ENCODE measurements at regions of chr20 and their contacts with region 1.

Region 1: GRCh38 chr20:2206957-2207769 is 88.6 kb upstream of the TGM3 start:
- DNase-seq: peak; percentile 85
- ATAC-seq: peak; percentile 77
- H3K4me3 Mint-ChIP-seq: peak overlapping the region; percentile 67
- H3K27ac Mint-ChIP-seq: peak overlapping the region; percentile 24
- H3K4me1 Mint-ChIP-seq: peaks cover 9% of the 10 kb centered on the region
- H3K27me3 Mint-ChIP-seq: no peaks in the 10 kb centered on the region

Region 2: GRCh38 chr20:1663917-1664316 is 543.2 kb before region 1 on chr20:
- CTCF ChIA-PET with region 1: no interaction called
- POLR2A ChIA-PET with region 1: no interaction called
- intact Hi-C with region 1: no loop called
- DNase-seq: peak; percentile 46
- ATAC-seq: peak; percentile 55
- H3K4me3 Mint-ChIP-seq: peak overlapping the region; percentile 47
- H3K27ac Mint-ChIP-seq: peak overlapping the region; percentile 98
- H3K4me1 Mint-ChIP-seq: peaks cover 96% of the 10 kb centered on the region
- H3K27me3 Mint-ChIP-seq: no peaks in the 10 kb centered on the region

Region 3: GRCh38 chr20:2114990-2115681 is 92.0 kb before region 1 on chr20:
- CTCF ChIA-PET with region 1: no interaction called
- POLR2A ChIA-PET with region 1: no interaction called
- intact Hi-C with region 1: loop called in 1 of 2 experiments (anchors 5 kb)
- DNase-seq: no peak
- ATAC-seq: no peak
- H3K4me3 Mint-ChIP-seq: no peak overlapping the region
- H3K27ac Mint-ChIP-seq: peak overlapping the region; percentile 11
- H3K4me1 Mint-ChIP-seq: peaks cover 78% of the 10 kb centered on the region
- H3K27me3 Mint-ChIP-seq: no peaks in the 10 kb centered on the region

Region 4: GRCh38 chr20:2195614-2196013 is 11.5 kb before region 1 on chr20:
- CTCF ChIA-PET with region 1: interaction called, 16 read pairs
- POLR2A ChIA-PET with region 1: no interaction called
- intact Hi-C with region 1: no loop called
- DNase-seq: no peak
- ATAC-seq: no peak
- H3K4me3 Mint-ChIP-seq: no peak overlapping the region
- H3K27ac Mint-ChIP-seq: no peak overlapping the region
- H3K4me1 Mint-ChIP-seq: no peaks in the 10 kb centered on the region
- H3K27me3 Mint-ChIP-seq: peaks cover 7% of the 10 kb centered on the region

Region 5: GRCh38 chr20:2289471-2289872 is 82.3 kb after region 1 on chr20:
- CTCF ChIA-PET with region 1: no interaction called
- POLR2A ChIA-PET with region 1: no interaction called
- intact Hi-C with region 1: no loop called
- DNase-seq: no peak
- ATAC-seq: no peak
- H3K4me3 Mint-ChIP-seq: no peak overlapping the region
- H3K27ac Mint-ChIP-seq: no peak overlapping the region
- H3K4me1 Mint-ChIP-seq: no peaks in the 10 kb centered on the region
- H3K27me3 Mint-ChIP-seq: peaks cover 3% of the 10 kb centered on the region

Region 6: DNA sequence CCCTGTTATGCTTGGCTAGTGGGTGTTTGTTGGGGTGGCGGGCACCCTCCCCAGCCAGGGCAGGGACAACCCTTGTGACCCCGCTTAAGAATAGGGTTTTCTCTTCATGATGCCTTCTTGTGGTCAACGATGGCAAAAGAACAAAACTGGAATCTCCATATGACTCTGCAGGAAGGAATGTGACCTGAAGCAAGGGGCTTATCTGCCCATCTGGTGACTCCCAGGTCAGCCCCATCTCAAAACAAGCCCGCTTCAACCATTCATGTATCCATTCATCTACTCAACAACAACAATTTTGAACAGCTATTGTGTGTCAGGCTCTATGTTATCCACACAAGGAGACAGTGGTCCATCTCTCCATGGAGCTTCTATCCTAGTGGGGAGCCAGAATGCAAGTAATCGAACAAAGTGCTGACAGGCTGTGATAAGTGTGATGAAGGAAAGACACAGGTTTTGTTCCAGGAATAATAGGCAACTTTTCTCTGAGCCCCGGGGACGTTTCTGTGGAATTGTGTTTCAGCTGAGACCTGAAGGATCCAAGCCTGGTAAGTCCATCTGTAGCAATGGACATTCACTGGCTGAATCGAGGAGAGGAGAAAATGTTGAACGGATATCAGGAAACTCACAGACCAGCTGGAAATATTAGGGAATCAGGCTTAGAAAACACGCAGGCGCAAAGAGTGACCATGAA is 142.8 kb after region 1 on chr20:
- CTCF ChIA-PET with region 1: interaction called, 4 read pairs
- POLR2A ChIA-PET with region 1: no interaction called
- intact Hi-C with region 1: loop called (anchors 1 to 2 kb)
- DNase-seq: no peak
- ATAC-seq: no peak
- H3K4me3 Mint-ChIP-seq: no peak overlapping the region
- H3K27ac Mint-ChIP-seq: no peak overlapping the region
- H3K4me1 Mint-ChIP-seq: peaks cover 6% of the 10 kb centered on the region
- H3K27me3 Mint-ChIP-seq: peaks cover 17% of the 10 kb centered on the region

Region 7: DNA sequence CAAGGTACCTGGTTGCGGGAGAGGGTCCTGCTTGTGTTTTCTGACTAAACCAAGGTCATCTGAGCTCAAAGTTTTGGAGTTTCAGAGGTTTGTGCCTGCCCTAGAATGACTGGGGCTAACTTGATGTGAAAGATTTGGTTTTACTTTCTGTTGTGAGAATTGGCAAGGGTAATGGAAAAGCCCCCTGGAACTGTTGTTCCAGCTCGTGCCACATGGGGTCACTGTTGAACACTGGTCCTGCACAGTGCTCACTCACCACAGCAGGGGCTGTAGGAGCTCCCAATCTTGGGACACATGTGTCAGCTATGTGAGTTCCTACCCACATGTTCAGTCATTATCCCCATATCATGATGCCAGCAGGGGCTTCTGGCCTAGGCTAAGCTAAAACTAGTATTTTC is 180.0 kb after region 1 on chr20:
- CTCF ChIA-PET with region 1: interaction called, 13 read pairs
- POLR2A ChIA-PET with region 1: no interaction called
- intact Hi-C with region 1: no loop called
- DNase-seq: peak; percentile 82
- ATAC-seq: peak; percentile 90
- H3K4me3 Mint-ChIP-seq: no peak overlapping the region
- H3K27ac Mint-ChIP-seq: no peak overlapping the region
- H3K4me1 Mint-ChIP-seq: peaks cover 3% of the 10 kb centered on the region
- H3K27me3 Mint-ChIP-seq: peaks cover 10% of the 10 kb centered on the region

Measured in activated CD4-positive, alpha-beta T cell treated with anti-CD3 and anti-CD28 coated beads for 36 hours (primary cell).